ENCODE measurements at regions of chr5 and their contacts with region 1.

Region 1: GRCh38 chr5:43019614-43020293 is 20.4 kb downstream of the ANXA2R start:
- DNase-seq: peak; percentile 84 to 94 (median 91)
- H3K4me3 ChIP-seq: peak overlapping the region; percentile 73 to 83
- H3K4me3 Mint-ChIP-seq: peak overlapping the region; percentile 94 to 99 (median 98)
- H3K27ac ChIP-seq: peak overlapping the region; percentile 94
- H3K27ac Mint-ChIP-seq: peak overlapping the region; percentile 99 to 100 (median 100)
- H3K4me1 ChIP-seq: peaks cover 40% of the 10 kb centered on the region
- H3K4me1 Mint-ChIP-seq: peaks cover 24 to 67% (median 34%) of the 10 kb centered on the region in 4 donors
- H3K27me3 ChIP-seq: no peaks in the 10 kb centered on the region
- H3K27me3 Mint-ChIP-seq: no peaks in the 10 kb centered on the region

Region 2: GRCh38 chr5:42876375-42876844 is 143.3 kb before region 1 on chr5:
- CTCF ChIA-PET with region 1: no interaction called
- POLR2A ChIA-PET with region 1: no interaction called
- intact Hi-C with region 1: no loop called
- DNase-seq: no peak
- H3K4me3 ChIP-seq: no peak overlapping the region
- H3K4me3 Mint-ChIP-seq: peak overlapping the region in 4 of 8 donors; percentile 13 to 37 (median 34)
- H3K27ac ChIP-seq: no peak overlapping the region
- H3K27ac Mint-ChIP-seq: peak overlapping the region in 1 of 7 donors; percentile 42
- H3K4me1 ChIP-seq: peaks cover 8% of the 10 kb centered on the region
- H3K4me1 Mint-ChIP-seq: peaks cover 0 to 12% (median 6%) of the 10 kb centered on the region in 4 donors
- H3K27me3 ChIP-seq: no peaks in the 10 kb centered on the region
- H3K27me3 Mint-ChIP-seq: peaks cover 3 to 6% of the 10 kb centered on the region in 2 donors

Region 3: GRCh38 chr5:42950440-42951292 is 69.1 kb before region 1 on chr5:
- CTCF ChIA-PET with region 1: interaction called, 48 read pairs
- POLR2A ChIA-PET with region 1: interaction called, 311 read pairs
- intact Hi-C with region 1: loop called (anchors 1 kb)
- DNase-seq: peak; percentile 61 to 90 (median 66)
- H3K4me3 ChIP-seq: peak overlapping the region; percentile 83 to 90
- H3K4me3 Mint-ChIP-seq: peak overlapping the region; percentile 93 to 99 (median 98)
- H3K27ac ChIP-seq: peak overlapping the region; percentile 96
- H3K27ac Mint-ChIP-seq: peak overlapping the region; percentile 99 to 100 (median 100)
- H3K4me1 ChIP-seq: peaks cover 22% of the 10 kb centered on the region
- H3K4me1 Mint-ChIP-seq: peaks cover 7 to 42% (median 30%) of the 10 kb centered on the region in 4 donors
- H3K27me3 ChIP-seq: no peaks in the 10 kb centered on the region
- H3K27me3 Mint-ChIP-seq: no peaks in the 10 kb centered on the region

Region 4: GRCh38 chr5:43034591-43034968 is 14.8 kb after region 1 on chr5:
- CTCF ChIA-PET with region 1: interaction called, 150 read pairs
- POLR2A ChIA-PET with region 1: interaction called, 1,197 read pairs
- intact Hi-C with region 1: no loop called
- DNase-seq: no peak
- H3K4me3 ChIP-seq: no peak overlapping the region
- H3K4me3 Mint-ChIP-seq: peak overlapping the region in 7 of 8 donors; percentile 2 to 77 (median 42)
- H3K27ac ChIP-seq: no peak overlapping the region
- H3K27ac Mint-ChIP-seq: peak overlapping the region; percentile 31 to 100 (median 72)
- H3K4me1 ChIP-seq: peaks cover 34% of the 10 kb centered on the region
- H3K4me1 Mint-ChIP-seq: peaks cover 26 to 61% (median 41%) of the 10 kb centered on the region in 4 donors
- H3K27me3 ChIP-seq: no peaks in the 10 kb centered on the region
- H3K27me3 Mint-ChIP-seq: no peaks in the 10 kb centered on the region

Region 5: DNA sequence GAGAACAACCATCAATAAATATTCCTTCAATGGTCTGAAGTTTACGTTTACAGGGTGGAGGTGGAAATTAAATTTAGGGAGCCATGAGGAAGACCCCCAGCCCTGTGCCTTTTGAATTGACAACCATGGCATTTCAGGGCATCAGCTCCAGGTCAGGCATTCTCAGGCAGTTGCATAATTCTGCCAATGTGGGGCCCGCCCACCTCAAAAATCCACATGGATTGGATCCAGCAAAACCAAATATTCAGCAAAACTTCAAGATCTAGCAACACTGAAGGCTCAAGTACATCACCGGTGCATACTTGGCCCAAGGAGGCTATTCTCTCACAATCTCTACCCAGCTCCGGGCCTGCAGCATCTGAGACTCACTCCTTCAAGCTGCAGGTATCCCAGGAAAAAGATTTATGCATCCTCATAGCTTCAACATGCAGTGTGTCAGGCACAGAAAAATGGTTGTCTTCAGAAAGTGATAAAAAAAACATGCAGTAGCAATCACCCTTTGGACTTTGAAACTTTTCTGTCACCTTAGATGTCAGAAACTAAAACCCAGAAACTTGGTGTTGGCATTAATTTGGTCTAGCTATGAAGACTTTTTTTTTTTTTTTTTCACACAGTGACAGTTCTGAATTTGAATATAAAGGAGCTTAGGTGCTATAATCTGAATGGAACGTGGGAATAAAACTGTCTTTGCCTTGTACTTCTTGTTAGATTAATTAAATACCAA is 41.8 kb after region 1 on chr5:
- CTCF ChIA-PET with region 1: interaction called, 33 read pairs
- POLR2A ChIA-PET with region 1: interaction called, 332 read pairs
- intact Hi-C with region 1: loop called (anchors 1 kb)
- DNase-seq: no peak
- H3K4me3 ChIP-seq: no peak overlapping the region
- H3K4me3 Mint-ChIP-seq: no peak overlapping the region
- H3K27ac ChIP-seq: no peak overlapping the region
- H3K27ac Mint-ChIP-seq: peak overlapping the region; percentile 20 to 93 (median 77)
- H3K4me1 ChIP-seq: peaks cover 8% of the 10 kb centered on the region
- H3K4me1 Mint-ChIP-seq: peaks cover 8 to 17% (median 13%) of the 10 kb centered on the region in 4 donors
- H3K27me3 ChIP-seq: no peaks in the 10 kb centered on the region
- H3K27me3 Mint-ChIP-seq: no peaks in the 10 kb centered on the region